Mammary epithelial cell (primary cell): ENCODE measurements at regions of chr11 and their contacts with region 1.

Region 1: GRCh38 chr11:3412837-3413236 is 33.9 kb upstream of the ZNF195 start:
- DNase-seq: no peak
- H3K4me3 ChIP-seq: no peak overlapping the region
- H3K27ac ChIP-seq: no peak overlapping the region
- H3K4me1 ChIP-seq: no peaks in the 10 kb centered on the region
- H3K27me3 ChIP-seq: no peaks in the 10 kb centered on the region
- CTCF ChIP-seq: no peak

Region 2: GRCh38 chr11:3341298-3341697 is 71.5 kb before region 1 on chr11:
- CTCF ChIA-PET with region 1: interaction called, 15 read pairs
- dilution Hi-C with region 1: no loop called
- in situ Hi-C with region 1: no loop called
- intact Hi-C with region 1: no loop called
- DNase-seq: peak; percentile 27
- H3K4me3 ChIP-seq: no peak overlapping the region
- H3K27ac ChIP-seq: no peak overlapping the region
- H3K4me1 ChIP-seq: peaks cover 10% of the 10 kb centered on the region
- H3K27me3 ChIP-seq: no peaks in the 10 kb centered on the region
- CTCF ChIP-seq: peak; percentile 77 to 82